ENCODE measurements at regions of chr1 and their contacts with region 1.

Region 1: GRCh38 chr1:67500413-67500959 is 70.3 kb upstream of the SERBP1 start:
- DNase-seq: no peak
- H3K4me3 ChIP-seq: peak overlapping the region in 1 of 4 donors; percentile 18
- H3K27ac ChIP-seq: no peak overlapping the region
- H3K4me1 ChIP-seq: peaks cover 0 to 8% (median 5%) of the 10 kb centered on the region in 3 donors
- H3K27me3 ChIP-seq: no peaks in the 10 kb centered on the region
- CTCF ChIP-seq: peak; percentile 86 to 99 (median 96)
- POLR2A ChIP-seq: no peak

Region 2: DNA sequence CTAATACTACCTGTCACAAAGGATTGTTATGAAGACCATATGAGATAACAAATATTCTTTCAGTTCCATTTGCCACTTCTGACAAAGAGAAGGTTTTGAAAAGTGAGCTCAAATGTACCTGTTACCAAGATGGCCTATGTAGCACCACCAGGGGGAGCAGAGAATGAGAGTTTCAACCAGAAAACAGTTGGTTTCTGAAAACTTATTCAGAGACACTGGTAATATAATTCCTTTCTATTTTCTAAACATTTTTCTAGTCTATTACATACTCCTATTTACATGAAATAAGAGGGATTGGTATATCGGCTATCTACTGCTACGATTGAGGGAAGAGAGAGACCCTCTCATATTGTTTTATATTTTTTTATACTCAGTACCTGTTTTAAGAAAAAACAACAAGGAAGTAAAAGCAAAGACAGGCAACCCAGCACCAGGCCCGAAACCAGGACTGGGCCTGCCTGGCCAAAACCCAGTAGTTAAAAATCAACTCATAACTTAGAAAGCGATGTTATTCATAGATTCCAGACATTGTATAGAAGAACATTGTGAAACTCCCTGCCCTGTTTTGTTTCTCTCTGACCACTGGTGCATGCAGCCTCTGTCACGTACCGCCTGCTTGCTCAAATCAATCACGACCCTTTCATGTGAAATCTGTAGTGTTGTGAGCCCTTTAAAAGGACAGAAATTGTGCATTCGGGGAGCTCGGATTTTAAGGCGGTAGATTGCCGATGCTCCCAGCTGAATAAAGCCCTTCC is 285.9 kb before region 1 on chr1:
- intact Hi-C with region 1: loop called (anchors 10 kb)
- DNase-seq: no peak
- H3K4me3 ChIP-seq: no peak overlapping the region
- H3K27ac ChIP-seq: peak overlapping the region in 3 of 4 donors; percentile 20 to 52 (median 40)
- H3K4me1 ChIP-seq: peaks cover 0 to 28% (median 0%) of the 10 kb centered on the region in 3 donors
- H3K27me3 ChIP-seq: no peaks in the 10 kb centered on the region
- CTCF ChIP-seq: peak; percentile 14 to 71 (median 54)
- POLR2A ChIP-seq: no peak

Region 3: DNA sequence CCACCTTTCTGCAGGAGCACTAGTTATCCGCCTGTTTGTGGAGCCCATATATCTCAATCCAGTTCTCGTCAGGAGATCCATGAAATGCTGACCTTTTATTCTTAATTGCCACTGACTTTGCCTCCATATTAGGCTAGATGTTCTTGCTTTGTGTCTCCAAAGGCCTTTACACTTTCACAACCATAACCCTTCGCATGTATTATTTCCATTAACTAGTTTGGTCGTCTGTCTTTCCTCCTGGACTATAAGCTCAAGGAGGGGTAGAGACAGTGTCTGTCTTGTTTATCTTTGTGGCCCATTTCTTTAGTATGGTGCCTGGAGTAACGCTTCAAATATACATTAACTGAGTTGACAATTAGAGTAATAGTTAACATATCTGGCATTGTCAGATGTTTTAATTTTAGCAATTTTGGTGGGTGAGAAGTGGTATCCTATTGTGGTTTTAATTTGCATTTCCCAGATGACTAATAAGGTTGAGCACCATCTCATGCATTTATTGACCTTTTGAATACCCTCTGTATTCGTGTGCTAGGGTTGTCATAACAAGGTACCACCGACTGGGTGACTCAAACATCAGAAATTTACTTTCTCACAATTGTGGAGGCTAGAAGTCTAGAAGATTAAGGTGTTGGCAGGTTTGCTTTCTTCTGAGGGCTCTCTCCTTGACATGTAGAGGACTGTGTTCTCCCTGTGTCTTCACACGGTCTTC is 214.6 kb before region 1 on chr1:
- intact Hi-C with region 1: no loop called
- DNase-seq: no peak
- H3K4me3 ChIP-seq: no peak overlapping the region
- H3K27ac ChIP-seq: no peak overlapping the region
- H3K4me1 ChIP-seq: no peaks in the 10 kb centered on the region
- H3K27me3 ChIP-seq: no peaks in the 10 kb centered on the region
- CTCF ChIP-seq: no peak
- POLR2A ChIP-seq: no peak

Region 4: DNA sequence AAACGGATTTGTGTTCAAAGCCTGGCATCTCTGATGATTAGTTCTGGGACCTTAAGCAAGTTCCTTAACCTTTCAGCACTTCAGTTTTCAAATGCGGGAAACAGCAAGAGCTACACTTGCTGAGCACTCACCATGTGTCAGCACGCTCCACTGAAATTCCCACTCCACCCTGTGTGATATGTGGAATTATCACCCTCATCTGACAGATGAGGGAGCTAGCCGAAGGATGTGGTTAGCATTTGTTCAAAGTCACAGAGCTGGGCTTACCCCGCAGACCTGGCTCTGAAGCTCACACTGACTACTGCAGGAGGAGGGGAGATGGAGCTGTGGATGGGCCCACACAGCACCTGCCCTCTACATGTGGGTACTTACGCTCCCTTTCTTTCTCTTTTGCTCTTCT is 163.7 kb before region 1 on chr1:
- intact Hi-C with region 1: no loop called
- DNase-seq: no peak
- H3K4me3 ChIP-seq: no peak overlapping the region
- H3K27ac ChIP-seq: no peak overlapping the region
- H3K4me1 ChIP-seq: peaks cover 0 to 35% (median 8%) of the 10 kb centered on the region in 3 donors
- H3K27me3 ChIP-seq: no peaks in the 10 kb centered on the region
- CTCF ChIP-seq: no peak
- POLR2A ChIP-seq: no peak

Region 5: GRCh38 chr1:67347688-67348472 is 152.6 kb before region 1 on chr1:
- intact Hi-C with region 1: loop called (anchors 5 kb)
- DNase-seq: no peak
- H3K4me3 ChIP-seq: peak overlapping the region in 3 of 4 donors; percentile 8 to 28 (median 12)
- H3K27ac ChIP-seq: peak overlapping the region; percentile 71 to 85 (median 81)
- H3K4me1 ChIP-seq: peaks cover 0 to 59% (median 11%) of the 10 kb centered on the region in 3 donors
- H3K27me3 ChIP-seq: no peaks in the 10 kb centered on the region
- CTCF ChIP-seq: peak; percentile 20 to 84 (median 69)
- POLR2A ChIP-seq: no peak

Measured in esophagus squamous epithelium (tissue), 5 donors.